GM10248 (cell line): ENCODE measurements at regions of chr1 and their contacts with region 1.

Region 1: GRCh38 chr1:116737020-116737854 is 17.0 kb upstream of the CD2 start:
- DNase-seq: peak; percentile 75
- CTCF ChIP-seq: peak; percentile 89

Region 2: GRCh38 chr1:116748272-116748671 is 11.0 kb after region 1 on chr1:
- CTCF ChIA-PET with region 1: interaction called, 26 read pairs
- POLR2A ChIA-PET with region 1: no interaction called
- DNase-seq: no peak
- CTCF ChIP-seq: no peak

Region 3: GRCh38 chr1:116763787-116764465 is 26.7 kb after region 1 on chr1:
- CTCF ChIA-PET with region 1: interaction called, 40 read pairs
- POLR2A ChIA-PET with region 1: interaction called, 7 read pairs
- DNase-seq: no peak
- CTCF ChIP-seq: no peak

Region 4: GRCh38 chr1:116817582-116818064 is 80.4 kb after region 1 on chr1:
- CTCF ChIA-PET with region 1: interaction called, 50 read pairs
- POLR2A ChIA-PET with region 1: no interaction called
- DNase-seq: peak; percentile 76
- CTCF ChIP-seq: peak; percentile 63

Region 5: DNA sequence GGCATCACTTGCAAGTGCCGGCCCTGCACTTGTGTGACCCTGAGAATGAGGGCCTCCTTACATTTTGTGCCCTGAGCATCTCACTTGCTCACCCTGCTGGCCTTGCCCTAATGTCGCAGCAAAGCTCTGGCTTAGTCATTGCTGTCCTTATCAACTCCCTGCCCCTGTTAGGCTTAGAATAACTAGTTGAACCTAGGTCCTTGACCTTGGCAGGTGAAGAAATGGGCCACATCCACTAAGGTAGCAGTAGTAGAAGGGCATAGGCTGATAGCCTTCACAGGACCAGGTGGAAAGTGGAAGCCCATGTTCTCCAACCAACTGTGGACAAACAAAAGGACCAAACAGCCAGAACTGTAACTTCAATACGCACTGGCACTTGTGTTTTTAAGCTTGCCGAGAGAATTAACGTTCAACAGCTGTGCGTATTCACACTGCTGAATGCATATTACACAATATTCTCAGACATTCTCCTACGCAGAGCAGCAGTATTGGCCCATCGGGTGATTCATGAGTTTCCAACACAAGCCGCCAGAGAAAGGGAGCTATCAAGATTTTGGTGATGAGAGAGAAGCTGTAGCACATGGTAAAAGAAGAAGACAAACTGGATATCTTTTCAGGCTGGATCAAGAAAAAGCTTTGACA is 144.8 kb after region 1 on chr1:
- CTCF ChIA-PET with region 1: interaction called, 35 read pairs
- POLR2A ChIA-PET with region 1: interaction called, 4 read pairs
- DNase-seq: peak; percentile 44
- CTCF ChIP-seq: peak; percentile 49

Region 6: GRCh38 chr1:116954440-116954839 is 217.2 kb after region 1 on chr1:
- CTCF ChIA-PET with region 1: no interaction called
- POLR2A ChIA-PET with region 1: no interaction called
- DNase-seq: no peak
- CTCF ChIP-seq: no peak

Region 7: DNA sequence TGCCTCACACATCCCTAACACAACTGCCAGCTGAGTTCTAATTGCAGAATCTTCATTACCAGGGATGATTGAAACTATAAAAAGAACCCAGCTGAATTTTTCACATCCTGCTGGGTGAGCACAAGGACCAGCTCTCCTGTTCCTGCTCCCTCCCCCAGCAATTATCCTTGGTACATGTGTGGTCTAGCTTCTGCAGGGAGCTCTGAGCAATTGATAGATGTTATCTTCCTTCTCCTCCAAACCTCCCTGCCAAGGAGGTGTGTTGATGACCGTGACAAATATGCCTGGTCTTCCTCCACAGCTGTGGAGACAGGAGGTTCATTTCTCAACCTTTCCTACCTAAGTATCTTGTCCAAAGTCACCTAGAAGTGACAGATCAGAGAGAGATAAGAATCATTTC is 564.7 kb after region 1 on chr1:
- CTCF ChIA-PET with region 1: no interaction called
- POLR2A ChIA-PET with region 1: no interaction called
- DNase-seq: no peak
- CTCF ChIP-seq: no peak